ENCODE measurements at regions of chr6 and their contacts with region 1.

Region 1: DNA sequence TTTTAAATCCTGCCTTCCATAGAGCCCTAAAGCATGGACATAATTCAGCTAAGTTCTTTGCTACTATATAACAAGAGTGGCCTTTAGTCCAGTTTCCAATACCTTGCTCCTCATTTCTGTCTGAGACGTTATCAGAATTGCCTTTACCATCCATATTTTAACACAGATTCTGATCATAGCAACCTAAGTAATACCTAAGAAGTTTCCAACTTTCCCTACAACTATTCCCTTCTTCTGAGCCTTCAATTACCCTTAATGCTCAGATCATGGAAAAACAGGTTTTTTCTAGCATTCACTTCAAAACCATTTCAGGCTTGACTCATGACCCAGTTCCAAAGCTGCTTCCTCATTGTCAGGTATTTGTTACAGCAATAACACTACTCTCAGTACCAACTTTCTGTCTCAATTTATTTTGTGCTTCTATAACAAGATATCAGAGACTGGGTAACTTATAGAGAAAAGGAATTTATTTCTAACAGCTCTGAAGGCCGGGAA is 367.1 kb downstream of the C6orf118 start:
- DNase-seq: no peak
- CTCF ChIP-seq: no peak

Region 2: DNA sequence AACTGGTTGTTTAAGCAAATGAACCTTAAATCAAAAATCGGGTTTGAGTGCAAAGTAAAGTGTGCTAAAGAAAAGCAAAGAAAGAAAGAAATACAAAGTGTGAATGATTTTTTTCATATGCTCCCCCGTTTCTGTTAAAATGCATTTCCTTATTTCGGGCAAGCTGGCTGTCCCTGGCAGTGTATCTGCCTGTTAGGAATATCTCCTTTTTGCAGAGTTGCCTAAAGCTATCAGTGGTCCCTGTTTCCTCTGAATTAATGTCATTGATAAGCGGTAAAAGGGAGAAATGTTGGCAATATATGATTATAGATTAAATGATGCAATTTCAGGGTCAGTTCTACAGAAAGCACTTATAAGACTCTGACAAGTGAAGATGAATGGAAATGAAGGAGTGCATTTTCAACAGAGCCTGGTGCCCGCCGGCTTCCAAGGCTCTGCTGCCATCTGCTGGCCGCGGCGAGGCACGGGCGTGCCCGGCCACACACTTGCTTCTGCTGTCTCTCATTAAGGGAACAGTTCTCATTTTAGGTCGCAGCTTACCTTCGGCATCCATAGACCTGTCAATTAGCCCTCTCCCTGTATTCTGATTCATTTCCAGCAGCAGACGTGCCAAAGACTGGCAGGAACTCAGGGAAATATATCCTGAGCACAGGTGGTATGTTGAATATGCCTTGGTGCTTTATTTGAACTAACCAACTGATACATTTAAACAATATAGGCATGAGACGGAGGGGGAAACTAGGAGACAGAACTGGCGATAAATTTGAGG is 14.8 kb before region 1 on chr6:
- CTCF ChIA-PET with region 1: interaction called, 10 read pairs
- POLR2A ChIA-PET with region 1: no interaction called
- DNase-seq: peak; percentile 58
- CTCF ChIP-seq: peak; percentile 98

Measured in GM10248 (cell line).